ENCODE measurements at regions of chrX and their contacts with region 1.

Region 1: DNA sequence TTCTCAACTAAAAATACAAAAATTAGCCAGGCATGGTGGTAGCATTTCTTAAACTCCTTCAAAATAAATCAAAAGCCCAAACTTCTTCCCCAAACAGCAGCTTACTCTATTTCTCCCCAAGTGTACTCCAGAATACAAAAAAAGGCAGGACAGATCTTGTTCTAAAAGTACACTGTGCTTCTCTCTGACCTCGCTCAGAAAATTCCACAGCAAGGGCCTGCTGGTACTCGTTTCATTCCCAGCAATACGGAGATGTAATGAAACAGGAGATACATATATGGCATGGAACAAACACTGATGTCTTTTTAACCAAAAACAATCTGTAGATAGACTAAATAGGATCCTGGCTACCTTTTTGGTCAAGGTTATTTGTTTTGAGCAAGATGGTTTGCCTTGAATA is 25.2 kb downstream of the MAP7D2 start:
- DNase-seq: no peak
- H3K4me3 ChIP-seq: no peak overlapping the region
- H3K27ac ChIP-seq: no peak overlapping the region
- H3K4me1 ChIP-seq: no peaks in the 10 kb centered on the region
- H3K27me3 ChIP-seq: no peaks in the 10 kb centered on the region
- CTCF ChIP-seq: no peak

Region 2: DNA sequence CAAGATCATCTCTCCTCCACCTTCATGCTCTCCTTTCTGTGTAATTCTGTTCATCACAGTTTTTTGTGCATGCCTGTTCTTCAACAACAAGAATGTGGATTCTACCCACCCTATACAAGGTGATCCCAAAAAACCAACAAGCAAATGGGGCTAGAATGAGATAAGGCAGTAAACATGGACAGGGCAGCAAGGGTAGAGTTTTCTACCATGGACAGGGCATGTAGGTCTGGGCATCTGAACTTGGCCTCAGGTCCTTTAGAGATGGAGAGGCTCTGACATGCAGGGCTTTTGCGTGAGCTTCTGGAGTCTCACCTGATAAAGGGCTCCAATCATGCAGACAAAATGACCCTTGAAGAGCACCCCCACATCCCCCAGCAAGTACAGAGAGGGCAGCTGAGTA is 11.2 kb before region 1 on chrX:
- CTCF ChIA-PET with region 1: no interaction called
- POLR2A ChIA-PET with region 1: interaction called, 20 read pairs
- intact Hi-C with region 1: no loop called
- DNase-seq: no peak
- H3K4me3 ChIP-seq: no peak overlapping the region
- H3K27ac ChIP-seq: no peak overlapping the region
- H3K4me1 ChIP-seq: no peaks in the 10 kb centered on the region
- H3K27me3 ChIP-seq: no peaks in the 10 kb centered on the region
- CTCF ChIP-seq: no peak

Measured in PC-9 (cell line).